PC-3 (cell line): ENCODE measurements at regions of chr1 and their contacts with region 1.

Region 1: GRCh38 chr1:211978596-211978995 is 56.8 kb downstream of the INTS7 start:
- DNase-seq: no peak
- ATAC-seq: no peak
- H3K4me3 ChIP-seq: no peak overlapping the region
- H3K27ac ChIP-seq: no peak overlapping the region
- H3K4me1 ChIP-seq: no peaks in the 10 kb centered on the region
- H3K27me3 ChIP-seq: no peaks in the 10 kb centered on the region
- CTCF ChIP-seq: no peak

Region 2: GRCh38 chr1:211991695-211992094 is 13.1 kb after region 1 on chr1:
- CTCF ChIA-PET with region 1: no interaction called
- POLR2A ChIA-PET with region 1: no interaction called
- intact Hi-C with region 1: loop called (anchors 2 kb)
- DNase-seq: no peak
- ATAC-seq: no peak
- H3K4me3 ChIP-seq: no peak overlapping the region
- H3K27ac ChIP-seq: no peak overlapping the region
- H3K4me1 ChIP-seq: no peaks in the 10 kb centered on the region
- H3K27me3 ChIP-seq: no peaks in the 10 kb centered on the region
- CTCF ChIP-seq: no peak